ENCODE measurements at regions of chr5 and their contacts with region 1.

Region 1: DNA sequence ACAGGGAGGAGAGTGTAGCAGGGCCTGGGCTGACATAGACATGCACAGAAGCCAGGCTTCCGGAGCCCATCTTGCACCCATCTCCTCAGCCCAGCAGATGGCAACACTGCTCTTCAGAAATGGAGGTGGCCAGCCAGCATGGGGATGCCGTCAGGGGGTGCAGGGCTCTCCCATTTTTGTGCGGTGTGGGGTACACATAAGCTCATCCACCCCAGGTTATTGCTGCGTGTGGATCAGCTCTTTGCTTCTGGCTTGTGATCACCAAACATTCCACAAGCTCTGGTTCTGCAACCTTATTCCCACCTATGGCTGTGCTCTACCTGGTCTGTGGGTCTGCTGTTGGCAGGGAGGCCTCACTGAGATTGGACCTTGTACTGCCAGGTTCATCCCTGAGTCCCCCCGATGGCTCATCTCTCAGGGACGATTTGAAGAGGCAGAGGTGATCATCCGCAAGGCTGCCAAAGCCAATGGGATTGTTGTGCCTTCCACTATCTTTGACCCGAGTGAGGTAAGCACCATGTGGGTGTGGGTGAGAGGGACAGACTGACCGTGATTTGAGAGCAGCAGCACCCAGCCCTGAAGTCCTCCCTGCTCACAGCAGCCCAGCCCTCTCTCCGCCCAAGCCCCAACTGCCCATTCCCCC is 17.3 kb downstream of the SLC22A5 start:
- DNase-seq: peak; percentile 81
- H3K4me3 ChIP-seq: no peak overlapping the region
- H3K27ac ChIP-seq: peak overlapping the region; percentile 35 to 66
- H3K4me1 ChIP-seq: peaks cover 30% of the 10 kb centered on the region
- H3K27me3 ChIP-seq: no peaks in the 10 kb centered on the region
- CTCF ChIP-seq: peak; percentile 51 to 74 (median 57)
- POLR2A ChIP-seq: no peak

Region 2: GRCh38 chr5:132495667-132496190 is 109.0 kb after region 1 on chr5:
- intact Hi-C with region 1: loop called (anchors 5 kb)
- DNase-seq: peak; percentile 91
- H3K4me3 ChIP-seq: peak overlapping the region; percentile 65 to 80
- H3K27ac ChIP-seq: peak overlapping the region; percentile 77 to 81
- H3K4me1 ChIP-seq: peaks cover 22% of the 10 kb centered on the region
- H3K27me3 ChIP-seq: no peaks in the 10 kb centered on the region
- CTCF ChIP-seq: no peak
- POLR2A ChIP-seq: no peak